ENCODE measurements at regions of chr14 and their contacts with region 1.

Region 1: GRCh38 chr14:106228541-106229158 is 702.3 kb downstream of the TMEM121 start:
- DNase-seq: no peak
- H3K4me3 Mint-ChIP-seq: peak overlapping the region; percentile 15
- H3K27ac Mint-ChIP-seq: peak overlapping the region; percentile 31
- H3K4me1 Mint-ChIP-seq: peaks cover 33% of the 10 kb centered on the region
- H3K27me3 Mint-ChIP-seq: no peaks in the 10 kb centered on the region

Region 2: DNA sequence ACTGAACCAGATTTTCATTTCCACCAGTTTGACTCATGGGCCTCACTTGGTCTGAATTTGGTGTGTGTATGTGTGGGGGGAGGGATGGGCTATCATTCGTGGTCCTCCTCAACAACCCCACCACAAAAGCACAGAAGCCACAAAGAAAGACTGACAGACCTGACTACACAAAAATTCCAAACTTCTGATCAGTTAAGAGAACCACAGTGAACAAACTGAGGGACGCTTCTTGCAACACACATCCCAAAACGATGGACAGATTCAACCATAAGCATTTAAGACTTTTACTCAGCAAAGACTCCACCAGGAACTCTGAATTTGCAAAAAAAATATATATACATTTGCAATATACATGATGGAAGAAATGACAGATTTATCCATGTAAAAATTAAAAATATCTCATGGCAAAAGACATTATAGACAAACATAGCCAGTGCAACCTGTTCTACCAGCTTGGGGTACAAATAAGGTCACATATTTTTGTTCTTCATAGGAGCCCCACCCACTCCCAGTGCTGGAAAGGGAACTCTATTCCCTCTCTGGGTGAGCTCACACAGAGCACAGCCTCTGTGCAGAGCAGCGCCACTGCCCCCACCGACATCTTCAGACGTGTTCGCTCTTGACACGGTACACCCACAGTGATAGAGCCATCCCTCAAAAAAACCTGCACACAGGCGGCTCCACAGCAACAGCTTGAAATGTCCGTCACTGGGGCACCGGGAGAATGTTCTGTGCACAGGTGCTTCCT is 1109.8 kb before region 1 on chr14:
- intact Hi-C with region 1: no loop called
- DNase-seq: no peak
- H3K4me3 Mint-ChIP-seq: no peak overlapping the region
- H3K27ac Mint-ChIP-seq: no peak overlapping the region
- H3K4me1 Mint-ChIP-seq: no peaks in the 10 kb centered on the region
- H3K27me3 Mint-ChIP-seq: peaks cover 7% of the 10 kb centered on the region

Region 3: GRCh38 chr14:106174206-106174605 is 54.4 kb before region 1 on chr14:
- intact Hi-C with region 1: loop called (anchors 10 kb)
- DNase-seq: peak; percentile 52
- H3K4me3 Mint-ChIP-seq: peak overlapping the region; percentile 22
- H3K27ac Mint-ChIP-seq: peak overlapping the region; percentile 39
- H3K4me1 Mint-ChIP-seq: peaks cover 46% of the 10 kb centered on the region
- H3K27me3 Mint-ChIP-seq: peaks cover 33% of the 10 kb centered on the region

Measured in activated T-helper 2 cell treated with anti-CD3 and anti-CD28 coated beads, Interferon-gamma antibody, Interleukin-2, Interleukin-4, amounts not matched to agents 10 μg/mL and 5 μg/mL and 100 μg/mL, durations not matched to agents 14 hours and 24 hours and 36 hours (primary cell).